CD4-positive, alpha-beta T cell (primary cell): ENCODE measurements at regions of chr22 and their contacts with region 1.

Region 1: GRCh38 chr22:21044931-21045584 is 688 bp upstream of the LRRC74B start:
- DNase-seq: peak in 2 of 14 experiments; percentile 11 to 14
- ATAC-seq: peak; percentile 19
- H3K4me3 ChIP-seq: peak overlapping the region; percentile 16
- H3K4me3 Mint-ChIP-seq: peak overlapping the region; percentile 42
- H3K27ac ChIP-seq: no peak overlapping the region
- H3K27ac Mint-ChIP-seq: no peak overlapping the region
- H3K4me1 ChIP-seq: peaks cover 30% of the 10 kb centered on the region
- H3K4me1 Mint-ChIP-seq: peaks cover 21% of the 10 kb centered on the region
- H3K27me3 ChIP-seq: peaks cover 6 to 7% of the 10 kb centered on the region in 2 experiments
- H3K27me3 Mint-ChIP-seq: peaks cover 32% of the 10 kb centered on the region
- CTCF ChIP-seq: no peak

Region 2: DNA sequence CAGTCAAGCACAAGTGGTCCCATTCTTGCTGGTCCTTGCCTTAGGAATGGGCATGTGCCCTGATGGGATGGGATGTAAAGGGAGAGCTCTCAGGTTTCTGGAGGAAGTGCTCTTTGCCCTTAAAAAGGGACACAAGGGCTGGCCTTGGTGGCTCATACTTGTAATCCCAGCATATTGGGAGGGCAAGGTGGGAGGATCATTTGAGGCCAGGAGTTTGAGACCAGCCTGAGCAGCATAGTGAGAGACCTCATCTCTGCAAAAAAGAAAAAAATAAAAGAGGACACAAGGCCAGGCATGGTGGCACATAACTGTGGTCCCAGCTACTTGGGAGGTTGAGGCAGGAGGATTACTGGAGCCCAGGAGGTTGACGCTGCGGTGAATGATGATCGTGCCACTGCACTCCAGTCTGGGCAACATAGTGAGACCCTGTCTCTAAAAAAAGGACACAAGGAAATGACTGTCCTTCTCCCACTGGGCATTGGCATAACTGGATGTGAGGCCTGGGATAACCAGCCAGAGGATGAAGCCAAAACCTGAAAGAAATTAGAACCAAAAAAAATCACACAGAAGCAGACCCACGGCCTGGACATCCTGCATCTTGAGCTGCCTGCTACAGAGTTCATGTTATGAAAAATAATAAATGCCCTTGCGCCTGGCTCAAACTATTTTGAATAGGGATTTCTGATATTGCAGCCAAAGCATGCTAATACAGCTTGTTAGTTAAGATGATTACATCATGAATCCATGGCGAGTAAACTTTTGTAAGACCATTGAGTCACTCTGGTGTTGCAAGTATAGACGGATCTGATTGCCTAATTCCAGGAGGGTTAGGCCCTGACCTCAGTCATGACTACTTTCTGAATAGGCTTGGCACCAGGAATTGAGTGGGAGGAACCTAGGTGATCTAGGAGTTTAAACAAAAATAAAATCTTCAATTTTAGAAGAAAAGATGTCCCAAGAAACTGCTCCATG is 140.8 kb before region 1 on chr22:
- CTCF ChIA-PET with region 1: no interaction called
- POLR2A ChIA-PET with region 1: no interaction called
- intact Hi-C with region 1: no loop called
- DNase-seq: peak in 3 of 14 experiments; percentile 11 to 66 (median 55)
- ATAC-seq: no peak
- H3K4me3 ChIP-seq: no peak overlapping the region
- H3K4me3 Mint-ChIP-seq: no peak overlapping the region
- H3K27ac ChIP-seq: no peak overlapping the region
- H3K27ac Mint-ChIP-seq: no peak overlapping the region
- H3K4me1 ChIP-seq: no peaks in the 10 kb centered on the region
- H3K4me1 Mint-ChIP-seq: no peaks in the 10 kb centered on the region
- H3K27me3 ChIP-seq: no peaks in the 10 kb centered on the region
- H3K27me3 Mint-ChIP-seq: no peaks in the 10 kb centered on the region
- CTCF ChIP-seq: no peak

Region 3: DNA sequence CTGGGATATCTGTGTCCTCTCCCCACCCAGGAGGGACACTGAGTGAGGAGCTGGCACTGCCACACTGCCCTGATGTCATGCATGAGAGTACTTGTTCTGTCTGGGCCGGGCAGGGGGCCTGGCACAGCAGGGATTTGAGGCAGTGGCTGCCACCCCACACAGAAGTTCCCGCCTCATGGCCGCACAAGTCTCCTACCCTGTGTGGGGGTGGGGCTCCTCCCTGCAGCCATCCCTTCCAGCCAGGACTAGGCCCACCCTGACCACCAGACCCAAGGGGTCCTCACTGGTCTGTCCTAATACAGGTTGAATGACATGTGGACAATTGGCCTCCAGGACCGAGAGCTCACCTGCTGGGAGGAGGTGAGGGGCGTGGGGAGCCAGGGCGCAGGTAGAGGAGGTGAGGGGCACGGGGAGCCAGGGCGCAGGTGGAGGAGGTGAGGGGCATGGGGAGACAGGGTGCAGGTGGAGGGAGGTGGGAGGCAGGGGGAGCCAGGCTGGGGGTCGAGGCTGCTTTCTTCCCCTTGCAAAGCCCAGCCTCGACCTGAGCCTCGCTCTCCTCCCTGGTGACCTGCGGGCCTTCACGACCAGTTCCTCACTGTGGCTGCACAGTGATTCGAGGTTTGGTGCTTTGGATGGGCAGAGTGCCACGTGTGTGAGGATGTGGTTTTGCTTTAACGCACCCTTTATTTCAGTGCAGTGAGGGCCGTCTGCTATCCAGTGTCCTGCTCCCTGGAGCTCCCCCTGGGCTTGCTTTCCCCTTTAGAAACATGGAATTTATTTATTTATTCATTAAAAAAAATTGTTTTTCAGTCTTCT is 55.5 kb before region 1 on chr22:
- CTCF ChIA-PET with region 1: no interaction called
- POLR2A ChIA-PET with region 1: no interaction called
- intact Hi-C with region 1: loop called in 1 of 2 experiments (anchors 5 kb)
- DNase-seq: no peak
- ATAC-seq: no peak
- H3K4me3 ChIP-seq: no peak overlapping the region
- H3K4me3 Mint-ChIP-seq: no peak overlapping the region
- H3K27ac ChIP-seq: no peak overlapping the region
- H3K27ac Mint-ChIP-seq: no peak overlapping the region
- H3K4me1 ChIP-seq: peaks cover 13% of the 10 kb centered on the region
- H3K4me1 Mint-ChIP-seq: no peaks in the 10 kb centered on the region
- H3K27me3 ChIP-seq: no peaks in the 10 kb centered on the region
- H3K27me3 Mint-ChIP-seq: no peaks in the 10 kb centered on the region
- CTCF ChIP-seq: no peak

Region 4: GRCh38 chr22:22026157-22026831 is 981.2 kb after region 1 on chr22:
- CTCF ChIA-PET with region 1: no interaction called
- POLR2A ChIA-PET with region 1: no interaction called
- intact Hi-C with region 1: no loop called
- DNase-seq: no peak
- ATAC-seq: no peak
- H3K4me3 ChIP-seq: no peak overlapping the region
- H3K4me3 Mint-ChIP-seq: no peak overlapping the region
- H3K27ac ChIP-seq: no peak overlapping the region
- H3K27ac Mint-ChIP-seq: no peak overlapping the region
- H3K4me1 ChIP-seq: no peaks in the 10 kb centered on the region
- H3K4me1 Mint-ChIP-seq: no peaks in the 10 kb centered on the region
- H3K27me3 ChIP-seq: no peaks in the 10 kb centered on the region
- H3K27me3 Mint-ChIP-seq: no peaks in the 10 kb centered on the region
- CTCF ChIP-seq: no peak